Activated naive CD8-positive, alpha-beta T cell treated with anti-CD3 and anti-CD28 coated beads, Interleukin-2, amount 10 ng/mL, durations not matched to agents 7 days and 5 days (primary cell): ENCODE measurements at regions of chr19 and their contacts with region 1.

Region 1: DNA sequence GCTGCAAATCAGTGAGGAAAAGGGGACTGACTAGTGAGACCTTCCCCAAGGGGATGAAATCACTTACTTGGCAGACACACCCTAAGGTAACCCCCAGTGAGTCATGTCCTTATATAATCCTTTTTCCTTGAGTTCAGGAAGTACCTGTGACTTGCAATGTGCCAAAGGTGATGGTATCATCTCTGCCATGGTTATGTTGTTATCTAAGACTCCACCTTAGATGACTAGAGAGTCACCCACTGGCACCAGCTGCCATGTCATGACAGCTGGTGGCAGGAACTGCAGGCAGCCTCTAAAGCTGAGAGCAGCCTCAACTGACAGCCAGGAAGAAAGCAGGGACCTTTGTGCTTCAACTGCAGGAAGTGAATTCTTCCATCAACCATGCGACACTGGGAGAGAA is 12.5 kb downstream of the PBX4 start:
- DNase-seq: no peak
- ATAC-seq: peak; percentile 77
- H3K4me3 Mint-ChIP-seq: peak overlapping the region; percentile 65
- H3K27ac Mint-ChIP-seq: peak overlapping the region; percentile 93
- H3K4me1 Mint-ChIP-seq: peaks cover 51% of the 10 kb centered on the region
- H3K27me3 Mint-ChIP-seq: no peaks in the 10 kb centered on the region

Region 2: GRCh38 chr19:19618219-19619051 is 12.4 kb after region 1 on chr19 and contains the start of gene PBX4:
- POLR2A ChIA-PET with region 1: interaction called, 10 read pairs
- DNase-seq: peak; percentile 99
- ATAC-seq: peak; percentile 94
- H3K4me3 Mint-ChIP-seq: peak within 1 kb of the TSS; percentile 86
- H3K27ac Mint-ChIP-seq: peak within 1 kb of the TSS; percentile 87
- H3K4me1 Mint-ChIP-seq: peaks cover 35% of the 10 kb centered on the region
- H3K27me3 Mint-ChIP-seq: peaks cover 2% of the 10 kb centered on the region
- total RNA-seq, gene PBX4: 41.3 to 46.1 TPM